B cell (primary cell): ENCODE measurements at regions of chr7 and their contacts with region 1.

Region 1: DNA sequence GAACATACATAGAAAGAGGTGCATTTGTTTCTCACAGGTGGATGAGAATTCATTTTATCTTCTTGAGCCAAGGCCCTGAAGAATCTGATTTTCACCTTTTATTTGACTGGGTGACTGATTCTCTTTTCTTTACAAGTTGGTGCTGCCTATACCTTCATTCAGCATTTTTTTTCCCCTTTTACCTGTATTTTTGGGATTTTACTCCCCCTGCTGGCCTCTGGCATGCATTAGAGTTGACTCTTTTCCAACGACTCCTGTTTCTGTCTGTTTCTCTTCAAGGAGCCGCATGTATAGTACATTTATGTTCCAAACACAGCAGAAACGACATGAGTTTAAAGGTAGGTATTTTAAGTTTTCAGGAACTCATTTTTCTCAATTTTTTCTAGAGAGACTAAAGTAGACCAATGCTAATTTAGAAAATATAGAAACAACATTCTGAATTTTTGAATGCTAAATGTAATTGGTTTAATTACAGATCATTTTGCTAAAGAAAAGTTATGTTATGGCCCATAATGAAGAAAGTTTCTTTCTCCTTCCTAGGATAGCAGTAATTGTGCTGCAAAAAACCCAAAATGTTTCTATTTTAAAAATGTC is 149.8 kb upstream of the HDAC9 start:
- DNase-seq: peak; percentile 73
- ATAC-seq: peak; percentile 64
- H3K4me3 ChIP-seq: no peak overlapping the region
- H3K4me3 Mint-ChIP-seq: no peak overlapping the region
- H3K27ac ChIP-seq: no peak overlapping the region
- H3K27ac Mint-ChIP-seq: no peak overlapping the region
- H3K4me1 ChIP-seq: peaks cover 20 to 26% of the 10 kb centered on the region in 2 donors
- H3K4me1 Mint-ChIP-seq: peaks cover 40% of the 10 kb centered on the region
- H3K27me3 ChIP-seq: no peaks in the 10 kb centered on the region
- H3K27me3 Mint-ChIP-seq: no peaks in the 10 kb centered on the region
- CTCF ChIP-seq: peak; percentile 90

Region 2: DNA sequence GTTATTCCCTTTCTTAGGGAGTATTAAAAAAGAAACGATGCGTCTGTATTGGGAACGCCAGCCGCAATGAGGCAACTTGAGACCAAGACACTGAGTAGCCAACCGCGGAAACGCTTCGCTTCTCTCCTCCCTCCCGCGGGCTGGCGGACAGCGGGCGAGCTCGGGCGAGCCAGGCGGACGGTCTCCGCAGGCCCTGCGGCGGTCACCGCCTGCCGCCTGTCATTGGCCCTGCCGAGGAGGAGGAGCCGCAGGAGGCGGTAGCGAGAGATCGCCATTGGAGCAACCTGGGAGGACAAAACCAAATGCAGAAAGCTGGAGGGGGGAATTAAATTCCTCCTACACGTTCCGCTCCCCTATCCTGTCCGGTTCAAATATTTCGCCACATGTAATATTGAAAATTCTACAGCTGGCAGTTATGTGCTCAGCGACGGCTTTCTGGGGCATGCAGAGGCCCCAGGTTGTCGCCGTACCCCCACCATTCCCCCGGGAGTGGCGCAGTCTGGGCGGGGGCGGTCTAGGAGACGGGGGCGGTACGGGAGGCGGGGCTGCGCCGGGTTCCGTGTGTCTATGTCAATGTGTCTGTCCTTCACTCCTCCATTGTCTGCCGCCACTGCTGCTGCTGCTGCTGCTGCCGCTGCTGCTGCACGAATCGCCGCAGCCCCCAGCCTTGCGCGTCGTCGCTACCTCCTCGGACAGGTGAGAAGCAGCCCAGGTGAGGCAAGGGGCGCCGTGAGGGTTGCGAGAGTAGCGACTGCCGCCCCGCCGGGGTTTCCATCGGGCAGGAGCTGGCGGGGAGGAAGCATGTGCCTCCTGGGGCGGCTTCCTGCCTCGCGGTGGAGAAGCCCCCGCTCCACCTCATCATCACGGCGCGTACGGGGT is 1699.9 kb before region 1 on chr7 and contains the starts of genes ANKMY2 and BZW2:
- CTCF ChIA-PET with region 1: no interaction called
- POLR2A ChIA-PET with region 1: no interaction called
- intact Hi-C with region 1: loop called (anchors 10 kb)
- DNase-seq: peak; percentile 96
- ATAC-seq: peak; percentile 86
- H3K4me3 ChIP-seq: peak within 1 kb of the TSS; percentile 75 to 99 (median 91)
- H3K4me3 Mint-ChIP-seq: peak within 1 kb of the TSS; percentile 99
- H3K27ac ChIP-seq: peak within 1 kb of the TSS; percentile 84 to 89
- H3K27ac Mint-ChIP-seq: peak within 1 kb of the TSS; percentile 99
- H3K4me1 ChIP-seq: peaks cover 20 to 26% of the 10 kb centered on the region in 2 donors
- H3K4me1 Mint-ChIP-seq: peaks cover 61% of the 10 kb centered on the region
- H3K27me3 ChIP-seq: no peaks in the 10 kb centered on the region
- H3K27me3 Mint-ChIP-seq: no peaks in the 10 kb centered on the region
- CTCF ChIP-seq: no peak
- total RNA-seq, gene ANKMY2: 17.8 and 18.2 TPM in 2 replicates
- total RNA-seq, gene BZW2: 17.0 and 18.4 TPM in 2 replicates

Region 3: GRCh38 chr7:17706734-17707133 is 639.0 kb before region 1 on chr7:
- CTCF ChIA-PET with region 1: interaction called, 10 read pairs
- POLR2A ChIA-PET with region 1: no interaction called
- intact Hi-C with region 1: loop called (anchors 1 kb)
- DNase-seq: peak; percentile 44
- ATAC-seq: no peak
- H3K4me3 ChIP-seq: no peak overlapping the region
- H3K4me3 Mint-ChIP-seq: no peak overlapping the region
- H3K27ac ChIP-seq: no peak overlapping the region
- H3K27ac Mint-ChIP-seq: no peak overlapping the region
- H3K4me1 ChIP-seq: no peaks in the 10 kb centered on the region
- H3K4me1 Mint-ChIP-seq: no peaks in the 10 kb centered on the region
- H3K27me3 ChIP-seq: no peaks in the 10 kb centered on the region
- H3K27me3 Mint-ChIP-seq: peaks cover 21% of the 10 kb centered on the region
- CTCF ChIP-seq: peak; percentile 58

Region 4: DNA sequence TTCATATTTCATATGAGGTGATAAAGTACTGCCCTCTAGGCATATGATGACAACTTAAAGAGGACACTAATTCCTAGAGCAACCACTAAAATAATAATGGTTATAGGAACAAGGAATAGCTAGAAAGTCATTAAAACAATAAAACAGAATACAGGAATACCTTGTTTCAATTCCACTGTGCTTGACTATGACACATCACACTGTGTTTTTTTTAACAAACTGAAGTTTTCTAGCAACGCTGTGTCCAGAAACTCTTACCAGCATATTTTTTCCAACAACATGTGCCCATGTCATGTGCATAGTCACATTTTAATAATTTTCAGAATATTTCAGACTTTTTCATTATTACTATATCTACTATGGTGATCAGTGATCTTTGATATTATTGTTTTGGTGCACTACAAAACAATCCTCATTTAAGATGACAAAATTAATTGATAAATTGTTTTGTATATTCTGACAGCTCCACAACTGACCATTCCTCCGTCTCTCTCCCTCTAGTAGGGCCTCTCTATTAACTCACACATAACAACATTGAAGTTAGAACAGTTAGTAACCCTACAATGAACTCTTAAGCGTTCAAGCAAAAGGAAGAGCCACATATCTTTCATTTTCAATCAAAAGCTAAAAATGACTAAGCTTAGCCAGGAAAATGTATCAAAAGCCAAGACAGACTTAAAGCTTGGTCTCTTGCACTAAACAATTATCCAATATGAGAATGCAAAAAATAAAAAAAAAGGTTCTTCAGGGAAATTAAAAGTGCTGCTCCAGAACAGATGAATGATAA is 491.3 kb before region 1 on chr7:
- CTCF ChIA-PET with region 1: no interaction called
- POLR2A ChIA-PET with region 1: no interaction called
- intact Hi-C with region 1: no loop called
- DNase-seq: no peak
- ATAC-seq: no peak
- H3K4me3 ChIP-seq: no peak overlapping the region
- H3K4me3 Mint-ChIP-seq: no peak overlapping the region
- H3K27ac ChIP-seq: no peak overlapping the region
- H3K27ac Mint-ChIP-seq: no peak overlapping the region
- H3K4me1 ChIP-seq: no peaks in the 10 kb centered on the region
- H3K4me1 Mint-ChIP-seq: no peaks in the 10 kb centered on the region
- H3K27me3 ChIP-seq: no peaks in the 10 kb centered on the region
- H3K27me3 Mint-ChIP-seq: no peaks in the 10 kb centered on the region
- CTCF ChIP-seq: no peak

Region 5: GRCh38 chr7:17940302-17940883 is 405.3 kb before region 1 on chr7 and contains the start of gene SNX13:
- CTCF ChIA-PET with region 1: no interaction called
- POLR2A ChIA-PET with region 1: no interaction called
- intact Hi-C with region 1: loop called (anchors 2 kb)
- DNase-seq: peak; percentile 95
- ATAC-seq: peak; percentile 90
- H3K4me3 ChIP-seq: peak within 1 kb of the TSS; percentile 81 to 96 (median 95)
- H3K4me3 Mint-ChIP-seq: peak within 1 kb of the TSS; percentile 98
- H3K27ac ChIP-seq: peak within 1 kb of the TSS; percentile 97
- H3K27ac Mint-ChIP-seq: peak within 1 kb of the TSS; percentile 99
- H3K4me1 ChIP-seq: peaks cover 14 to 22% of the 10 kb centered on the region in 2 donors
- H3K4me1 Mint-ChIP-seq: peaks cover 38% of the 10 kb centered on the region
- H3K27me3 ChIP-seq: no peaks in the 10 kb centered on the region
- H3K27me3 Mint-ChIP-seq: no peaks in the 10 kb centered on the region
- CTCF ChIP-seq: no peak
- total RNA-seq, gene SNX13: 58.1 and 62.6 TPM in 2 replicates

Region 6: DNA sequence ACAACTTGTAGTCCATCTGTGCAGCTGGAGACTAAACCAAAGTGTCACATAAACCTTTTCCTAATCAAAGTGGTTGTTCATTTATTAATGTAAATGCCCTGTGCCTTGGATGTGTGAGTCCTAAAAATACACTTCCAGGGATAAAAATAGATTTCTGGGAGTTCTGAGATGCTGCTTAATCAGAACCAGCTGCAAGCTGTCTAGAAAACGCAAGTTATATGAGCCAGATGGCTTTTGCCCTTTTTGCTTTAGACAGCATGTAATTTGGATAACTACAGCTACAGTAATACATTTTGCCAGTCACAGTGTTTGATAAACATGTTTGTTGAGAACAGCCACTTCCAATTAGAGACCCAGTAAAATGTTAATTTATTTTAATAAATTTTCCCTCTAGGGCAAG is 133.0 kb before region 1 on chr7:
- CTCF ChIA-PET with region 1: interaction called, 160 read pairs
- POLR2A ChIA-PET with region 1: no interaction called
- intact Hi-C with region 1: loop called (anchors 1 kb)
- DNase-seq: no peak
- ATAC-seq: no peak
- H3K4me3 ChIP-seq: no peak overlapping the region
- H3K4me3 Mint-ChIP-seq: no peak overlapping the region
- H3K27ac ChIP-seq: no peak overlapping the region
- H3K27ac Mint-ChIP-seq: no peak overlapping the region
- H3K4me1 ChIP-seq: peaks cover 6 to 7% of the 10 kb centered on the region in 2 donors
- H3K4me1 Mint-ChIP-seq: peaks cover 10% of the 10 kb centered on the region
- H3K27me3 ChIP-seq: no peaks in the 10 kb centered on the region
- H3K27me3 Mint-ChIP-seq: peaks cover 3% of the 10 kb centered on the region
- CTCF ChIP-seq: no peak

Region 7: GRCh38 chr7:18320971-18321567 is 24.7 kb before region 1 on chr7:
- CTCF ChIA-PET with region 1: interaction called, 16 read pairs
- POLR2A ChIA-PET with region 1: no interaction called
- intact Hi-C with region 1: no loop called
- DNase-seq: peak; percentile 63
- ATAC-seq: peak; percentile 81
- H3K4me3 ChIP-seq: no peak overlapping the region
- H3K4me3 Mint-ChIP-seq: no peak overlapping the region
- H3K27ac ChIP-seq: no peak overlapping the region
- H3K27ac Mint-ChIP-seq: no peak overlapping the region
- H3K4me1 ChIP-seq: peaks cover 4 to 20% of the 10 kb centered on the region in 2 donors
- H3K4me1 Mint-ChIP-seq: peaks cover 39% of the 10 kb centered on the region
- H3K27me3 ChIP-seq: no peaks in the 10 kb centered on the region
- H3K27me3 Mint-ChIP-seq: no peaks in the 10 kb centered on the region
- CTCF ChIP-seq: peak; percentile 81

Region 8: GRCh38 chr7:18421297-18422002 is 75.7 kb after region 1 on chr7:
- CTCF ChIA-PET with region 1: no interaction called
- POLR2A ChIA-PET with region 1: no interaction called
- intact Hi-C with region 1: no loop called
- DNase-seq: peak; percentile 9
- ATAC-seq: no peak
- H3K4me3 ChIP-seq: no peak overlapping the region
- H3K4me3 Mint-ChIP-seq: no peak overlapping the region
- H3K27ac ChIP-seq: no peak overlapping the region
- H3K27ac Mint-ChIP-seq: no peak overlapping the region
- H3K4me1 ChIP-seq: peaks cover 4% of the 10 kb centered on the region in 2 donors
- H3K4me1 Mint-ChIP-seq: peaks cover 19% of the 10 kb centered on the region
- H3K27me3 ChIP-seq: no peaks in the 10 kb centered on the region
- H3K27me3 Mint-ChIP-seq: no peaks in the 10 kb centered on the region
- CTCF ChIP-seq: no peak

Region 9: DNA sequence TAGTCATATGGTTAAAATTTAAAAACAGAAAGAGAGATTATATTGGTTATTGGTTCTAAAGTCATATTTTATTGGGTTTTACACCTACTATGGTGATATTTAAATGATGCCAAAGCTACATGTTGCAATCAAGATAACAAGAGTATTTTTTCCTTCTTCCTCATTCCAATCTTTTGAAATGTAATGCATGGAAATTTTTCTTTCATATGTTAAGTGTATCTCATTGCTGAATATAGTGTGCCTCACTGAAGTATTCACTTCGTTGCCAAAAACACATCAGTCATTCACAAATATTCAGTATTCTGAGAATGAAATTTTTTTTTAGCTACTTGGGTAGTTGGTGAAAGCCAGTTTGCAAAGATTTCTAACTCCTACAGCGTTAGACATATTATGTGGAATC is 169.3 kb after region 1 on chr7:
- CTCF ChIA-PET with region 1: no interaction called
- POLR2A ChIA-PET with region 1: no interaction called
- intact Hi-C with region 1: no loop called
- DNase-seq: no peak
- ATAC-seq: no peak
- H3K4me3 ChIP-seq: no peak overlapping the region
- H3K4me3 Mint-ChIP-seq: no peak overlapping the region
- H3K27ac ChIP-seq: no peak overlapping the region
- H3K27ac Mint-ChIP-seq: no peak overlapping the region
- H3K4me1 ChIP-seq: peaks cover 10 to 27% of the 10 kb centered on the region in 2 donors
- H3K4me1 Mint-ChIP-seq: peaks cover 64% of the 10 kb centered on the region
- H3K27me3 ChIP-seq: no peaks in the 10 kb centered on the region
- H3K27me3 Mint-ChIP-seq: no peaks in the 10 kb centered on the region
- CTCF ChIP-seq: no peak

Region 10: DNA sequence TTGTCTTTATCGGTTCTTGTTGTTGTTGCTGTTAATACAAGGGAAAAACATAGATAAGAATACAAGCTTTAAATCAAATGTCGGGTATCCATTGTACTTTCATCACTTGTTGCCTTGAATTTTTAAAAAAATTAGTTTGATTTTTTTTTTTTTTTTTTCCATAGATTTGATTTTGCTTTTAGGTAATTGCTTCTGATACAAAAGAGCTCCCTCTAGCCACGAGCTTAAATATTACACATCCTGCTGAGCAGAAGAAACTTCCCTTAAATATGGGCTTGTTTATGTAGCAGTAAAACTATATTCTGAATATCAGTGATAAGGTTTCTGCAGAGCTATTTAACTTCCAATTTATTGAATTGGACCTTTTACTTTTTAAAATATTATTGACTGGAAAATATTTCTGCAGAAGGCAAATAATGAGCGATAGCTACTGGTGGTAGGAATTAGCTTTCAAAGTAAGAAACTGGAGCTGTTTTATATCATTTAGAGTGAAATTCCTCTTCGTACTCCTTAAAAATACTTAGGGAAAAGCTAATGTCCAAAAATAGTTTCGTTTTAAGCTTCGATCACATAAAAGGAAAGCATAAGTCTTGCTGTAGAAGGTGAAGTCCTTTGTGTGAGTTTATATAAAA is 1146.2 kb after region 1 on chr7:
- CTCF ChIA-PET with region 1: no interaction called
- POLR2A ChIA-PET with region 1: no interaction called
- intact Hi-C with region 1: loop called (anchors 5 kb)
- DNase-seq: peak; percentile 8
- ATAC-seq: no peak
- H3K4me3 ChIP-seq: no peak overlapping the region
- H3K4me3 Mint-ChIP-seq: no peak overlapping the region
- H3K27ac ChIP-seq: no peak overlapping the region
- H3K27ac Mint-ChIP-seq: no peak overlapping the region
- H3K4me1 ChIP-seq: no peaks in the 10 kb centered on the region
- H3K4me1 Mint-ChIP-seq: no peaks in the 10 kb centered on the region
- H3K27me3 ChIP-seq: no peaks in the 10 kb centered on the region
- H3K27me3 Mint-ChIP-seq: no peaks in the 10 kb centered on the region
- CTCF ChIP-seq: peak; percentile 63